Cardiac septum (tissue), 1 donor: ENCODE measurements at regions of chr4 and their contacts with region 1.

Region 1: GRCh38 chr4:13705521-13706041 is 78.1 kb upstream of the BOD1L1 start:
- DNase-seq: no peak

Region 2: DNA sequence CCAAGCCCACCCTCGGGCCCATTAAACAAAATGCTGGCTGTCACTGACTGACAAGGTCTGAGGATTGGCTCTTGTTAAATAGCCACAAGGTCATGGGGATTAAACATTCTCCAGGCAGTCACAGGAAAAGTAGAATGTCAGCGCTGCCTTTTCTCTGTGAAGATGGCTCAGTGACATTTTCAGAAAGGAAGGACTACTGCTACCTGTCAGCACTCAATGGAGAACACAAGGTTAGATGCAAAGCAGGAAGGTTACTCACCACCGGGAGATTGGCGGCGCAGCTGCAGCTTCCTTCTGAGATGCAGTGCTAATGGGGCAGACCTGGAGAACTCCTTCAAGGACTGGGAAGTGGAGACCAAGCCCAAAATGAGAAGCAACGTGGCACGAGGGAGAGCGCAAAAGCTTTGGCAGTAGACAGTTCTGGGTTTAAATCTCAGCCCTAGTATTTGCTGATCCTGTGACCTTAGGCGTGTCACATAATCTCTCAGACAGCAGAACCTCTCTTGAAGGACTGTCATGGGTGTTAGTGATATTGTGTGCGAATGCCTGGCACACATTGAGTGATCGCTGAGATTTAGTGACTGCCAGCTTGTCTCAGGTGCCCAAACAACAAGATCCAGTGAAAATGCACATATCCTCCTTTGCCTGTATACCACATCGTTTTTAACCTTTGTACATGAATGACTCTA is 135.1 kb after region 1 on chr4:
- intact Hi-C with region 1: loop called (anchors 5 kb)
- DNase-seq: no peak